Activated CD8-positive, alpha-beta T cell treated with anti-CD3 and anti-CD28 coated beads for 36 hours (primary cell): ENCODE measurements at regions of chr21 and their contacts with region 1.

Region 1: GRCh38 chr21:44510508-44511210 is 29.3 kb downstream of the KRTAP10-1 start:
- DNase-seq: peak; percentile 78
- ATAC-seq: peak; percentile 90
- H3K4me3 Mint-ChIP-seq: peak overlapping the region; percentile 27
- H3K27ac Mint-ChIP-seq: no peak overlapping the region
- H3K4me1 Mint-ChIP-seq: peaks cover 4% of the 10 kb centered on the region
- H3K27me3 Mint-ChIP-seq: no peaks in the 10 kb centered on the region
- CTCF ChIP-seq: peak; percentile 93

Region 2: GRCh38 chr21:44492567-44493385 is 17.9 kb before region 1 on chr21:
- CTCF ChIA-PET with region 1: interaction called, 10 read pairs
- POLR2A ChIA-PET with region 1: no interaction called
- intact Hi-C with region 1: no loop called
- DNase-seq: no peak
- ATAC-seq: no peak
- H3K4me3 Mint-ChIP-seq: no peak overlapping the region
- H3K27ac Mint-ChIP-seq: peak overlapping the region; percentile 10
- H3K4me1 Mint-ChIP-seq: no peaks in the 10 kb centered on the region
- H3K27me3 Mint-ChIP-seq: peaks cover 8% of the 10 kb centered on the region
- CTCF ChIP-seq: no peak

Region 3: GRCh38 chr21:44718571-44718970 is 207.9 kb after region 1 on chr21:
- CTCF ChIA-PET with region 1: interaction called, 11 read pairs
- POLR2A ChIA-PET with region 1: no interaction called
- intact Hi-C with region 1: no loop called
- DNase-seq: no peak
- ATAC-seq: no peak
- H3K4me3 Mint-ChIP-seq: no peak overlapping the region
- H3K27ac Mint-ChIP-seq: no peak overlapping the region
- H3K4me1 Mint-ChIP-seq: peaks cover 9% of the 10 kb centered on the region
- H3K27me3 Mint-ChIP-seq: peaks cover 33% of the 10 kb centered on the region
- CTCF ChIP-seq: no peak

Region 4: DNA sequence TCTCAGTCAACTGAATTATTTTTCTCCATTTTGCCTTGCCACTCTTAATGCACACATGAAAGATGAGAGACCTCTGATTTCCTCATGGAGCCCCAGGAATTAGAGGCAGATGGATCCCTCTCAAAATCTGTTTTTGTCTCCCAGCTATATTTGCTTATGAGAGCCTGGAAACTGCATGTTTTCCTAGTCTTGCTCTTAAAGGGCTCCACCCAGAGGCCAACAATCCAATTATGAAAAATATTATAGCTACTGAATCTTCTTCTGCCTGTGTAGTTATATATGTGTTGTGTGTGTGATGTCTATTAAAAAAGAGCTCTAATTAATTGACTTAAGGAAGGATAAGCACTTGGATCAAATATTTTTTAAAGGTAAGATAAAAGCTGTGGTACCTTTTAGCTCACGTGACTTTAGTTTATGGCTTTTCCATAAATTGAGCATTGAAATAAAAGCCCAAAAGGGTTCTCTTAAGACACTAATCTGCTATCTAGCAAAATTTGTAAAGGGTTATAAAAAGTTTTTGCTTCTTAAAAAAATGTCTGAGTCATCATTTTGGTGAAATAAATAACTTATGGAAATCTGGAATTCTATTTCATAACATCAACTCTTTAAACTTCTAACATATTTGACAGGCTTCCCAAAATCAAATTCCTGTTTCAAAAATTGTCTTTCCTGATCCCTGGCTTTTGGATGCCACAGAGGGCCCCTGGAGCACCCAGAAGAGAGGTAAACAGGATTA is 231.9 kb after region 1 on chr21:
- CTCF ChIA-PET with region 1: interaction called, 31 read pairs
- POLR2A ChIA-PET with region 1: no interaction called
- intact Hi-C with region 1: loop called (anchors 10 kb)
- DNase-seq: no peak
- ATAC-seq: no peak
- H3K4me3 Mint-ChIP-seq: no peak overlapping the region
- H3K27ac Mint-ChIP-seq: no peak overlapping the region
- H3K4me1 Mint-ChIP-seq: peaks cover 4% of the 10 kb centered on the region
- H3K27me3 Mint-ChIP-seq: no peaks in the 10 kb centered on the region
- CTCF ChIP-seq: peak; percentile 48

Region 5: DNA sequence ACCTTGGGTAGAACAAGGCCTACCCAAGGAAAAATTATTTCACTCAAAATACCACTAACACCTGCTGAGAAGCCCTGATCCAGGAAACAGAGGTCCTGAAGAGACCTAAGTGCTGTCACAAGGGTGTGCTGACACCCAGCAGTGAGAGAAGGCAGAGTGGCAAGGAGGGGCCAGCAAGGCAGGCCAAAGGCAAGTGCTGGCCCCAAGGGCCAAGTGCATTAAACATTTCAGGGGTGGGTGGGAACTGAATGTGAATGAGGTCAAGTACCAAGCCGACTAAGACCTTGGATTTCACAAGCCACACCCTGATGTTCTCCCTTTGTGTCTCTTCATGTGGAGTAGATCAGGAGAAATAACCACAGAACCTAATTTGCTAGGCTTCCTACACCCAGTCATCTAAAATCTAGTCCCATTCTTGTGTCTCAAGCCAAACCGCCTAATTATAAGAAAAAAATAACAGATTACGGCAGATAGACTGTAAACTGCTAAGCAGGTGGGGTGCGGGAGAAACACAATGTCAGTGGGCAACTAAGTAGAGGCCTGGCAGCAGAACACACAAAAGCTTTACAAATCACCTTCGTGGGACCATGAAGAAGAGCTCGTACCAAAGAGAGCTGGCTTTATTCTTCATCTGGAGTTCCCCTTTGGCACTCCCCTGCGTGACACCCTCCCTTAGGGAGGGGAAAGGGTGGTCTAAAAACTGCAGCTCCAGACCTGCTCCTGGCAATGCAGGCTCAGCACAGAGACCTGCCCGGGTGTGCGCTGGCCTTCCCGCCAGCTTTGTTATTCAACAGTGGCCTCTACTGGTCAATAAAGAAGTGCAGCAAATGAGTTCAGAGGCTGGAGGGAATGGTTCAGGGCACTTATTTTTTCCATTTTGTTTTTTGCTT is 282.3 kb after region 1 on chr21:
- CTCF ChIA-PET with region 1: interaction called, 28 read pairs
- POLR2A ChIA-PET with region 1: no interaction called
- intact Hi-C with region 1: loop called (anchors 5 kb)
- DNase-seq: peak; percentile 56
- ATAC-seq: peak; percentile 98
- H3K4me3 Mint-ChIP-seq: no peak overlapping the region
- H3K27ac Mint-ChIP-seq: peak overlapping the region; percentile 48
- H3K4me1 Mint-ChIP-seq: peaks cover 67% of the 10 kb centered on the region
- H3K27me3 Mint-ChIP-seq: no peaks in the 10 kb centered on the region
- CTCF ChIP-seq: peak; percentile 80